ENCODE measurements at regions of chr15 and their contacts with region 1.

Region 1: DNA sequence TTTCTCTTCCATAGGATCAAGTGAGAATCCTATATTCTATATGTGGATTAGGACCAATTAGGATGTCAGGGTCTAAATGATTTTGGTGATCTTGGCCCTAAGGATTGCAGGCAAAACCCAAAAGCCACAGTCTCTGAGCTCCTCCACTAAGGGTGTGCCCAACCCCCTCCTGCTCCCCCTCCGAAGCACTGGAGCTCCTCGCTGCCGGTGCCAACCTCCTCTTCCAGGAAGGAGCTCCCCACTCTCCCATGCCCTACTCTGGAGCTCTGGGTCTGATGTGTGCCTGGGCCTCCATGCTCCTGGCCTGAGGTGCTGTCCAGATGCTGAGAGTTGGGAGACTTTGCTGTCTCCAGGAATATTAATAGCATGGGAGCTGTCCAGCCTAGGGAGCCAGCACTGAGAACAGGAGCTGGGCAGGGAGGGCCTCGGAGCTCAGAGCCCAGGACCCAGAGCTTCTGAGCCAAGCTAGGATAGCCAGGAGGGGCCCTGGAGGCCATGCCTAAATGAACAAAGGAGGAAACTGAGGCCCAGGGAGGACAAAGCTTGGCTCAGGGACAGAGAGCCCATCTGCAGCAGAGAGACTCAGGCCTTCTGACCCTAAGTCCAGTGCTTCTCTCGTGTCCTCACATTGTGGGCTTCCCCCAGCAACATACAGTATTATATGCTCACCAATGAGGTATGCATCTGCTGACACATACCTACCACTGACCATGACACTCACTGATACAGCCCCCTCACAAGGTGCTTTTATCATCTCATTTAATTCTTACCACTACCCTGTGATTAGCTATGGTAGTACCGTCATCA is 36.9 kb upstream of the HERC1 start:
- DNase-seq: no peak
- H3K4me3 Mint-ChIP-seq: no peak overlapping the region
- H3K27ac Mint-ChIP-seq: no peak overlapping the region
- H3K4me1 Mint-ChIP-seq: peaks cover 31% of the 10 kb centered on the region
- H3K27me3 Mint-ChIP-seq: no peaks in the 10 kb centered on the region

Region 2: GRCh38 chr15:63860155-63860554 is 10.5 kb before region 1 on chr15:
- intact Hi-C with region 1: loop called (anchors 1 kb)
- DNase-seq: peak; percentile 44
- H3K4me3 Mint-ChIP-seq: peak overlapping the region; percentile 20
- H3K27ac Mint-ChIP-seq: peak overlapping the region; percentile 64
- H3K4me1 Mint-ChIP-seq: peaks cover 39% of the 10 kb centered on the region
- H3K27me3 Mint-ChIP-seq: no peaks in the 10 kb centered on the region

Region 3: GRCh38 chr15:64187396-64188191 is 317.0 kb after region 1 on chr15:
- intact Hi-C with region 1: no loop called
- DNase-seq: no peak
- H3K4me3 Mint-ChIP-seq: peak overlapping the region; percentile 21
- H3K27ac Mint-ChIP-seq: peak overlapping the region; percentile 62
- H3K4me1 Mint-ChIP-seq: peaks cover 19% of the 10 kb centered on the region
- H3K27me3 Mint-ChIP-seq: no peaks in the 10 kb centered on the region

Measured in activated T-helper 1 cell treated with anti-CD3 and anti-CD28 coated beads, Interleukin-12 subunit alpha, Interleukin-12 subunit beta, Interleukin-2, Interleukin-4 antibody, amounts not matched to agents 30 ng/mL and 10 ng/mL and 1 ng/mL, durations not matched to agents 14 hours and 24 hours and 36 hours (primary cell).